ENCODE measurements at regions of chr2 and their contacts with region 1.

Region 1: DNA sequence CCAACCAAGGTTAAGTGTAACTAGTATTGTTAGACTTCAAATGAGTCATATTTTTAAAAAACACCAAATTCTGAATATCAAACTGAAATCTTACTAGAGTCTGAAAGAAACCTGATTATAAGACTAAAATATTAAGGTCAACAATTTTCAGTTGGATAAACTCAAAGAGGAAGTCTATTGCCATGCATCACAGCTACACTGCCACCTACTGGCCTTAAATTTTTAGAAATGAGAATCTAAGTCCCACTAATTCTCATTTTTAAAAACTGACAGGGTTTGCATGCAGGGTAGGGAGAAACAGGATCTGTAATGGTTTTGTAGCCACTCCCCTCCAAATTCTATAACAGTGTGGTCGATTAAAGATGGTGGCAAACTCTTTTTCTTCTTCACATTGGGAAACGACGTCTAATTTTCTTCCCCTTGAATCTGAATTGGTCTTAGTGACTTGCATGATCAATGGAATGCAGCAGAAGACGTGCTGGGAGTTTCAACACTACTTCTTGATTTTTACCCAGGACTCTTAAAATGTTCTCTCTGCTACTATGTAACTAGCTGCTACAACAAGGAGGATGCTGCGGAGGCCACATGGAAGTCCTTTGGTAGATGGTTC is 176.1 kb upstream of the SESTD1 start:
- DNase-seq: peak in 1 of 3 donors; percentile 8
- ATAC-seq: no peak
- H3K4me3 ChIP-seq: no peak overlapping the region
- H3K4me1 ChIP-seq: no peaks in the 10 kb centered on the region
- CTCF ChIP-seq: peak; percentile 38

Region 2: GRCh38 chr2:179218848-179219594 is 221.7 kb before region 1 on chr2:
- intact Hi-C with region 1: loop called in 1 of 2 experiments (anchors 10 kb)
- DNase-seq: peak in 2 of 3 donors; percentile 50 to 87
- ATAC-seq: peak; percentile 84
- H3K4me3 ChIP-seq: no peak overlapping the region
- H3K4me1 ChIP-seq: no peaks in the 10 kb centered on the region
- CTCF ChIP-seq: peak; percentile 52